ENCODE measurements at regions of chr9 and their contacts with region 1.

Region 1: GRCh38 chr9:22452415-22453010 is 5.9 kb downstream of the DMRTA1 start:
- DNase-seq: no peak
- H3K4me3 ChIP-seq: no peak overlapping the region
- H3K27ac ChIP-seq: no peak overlapping the region
- H3K27me3 ChIP-seq: no peaks in the 10 kb centered on the region
- CTCF ChIP-seq: peak; percentile 73

Region 2: GRCh38 chr9:22265038-22265437 is 187.5 kb before region 1 on chr9:
- CTCF ChIA-PET with region 1: no interaction called
- POLR2A ChIA-PET with region 1: no interaction called
- DNase-seq: no peak
- H3K4me3 ChIP-seq: no peak overlapping the region
- H3K27ac ChIP-seq: no peak overlapping the region
- H3K27me3 ChIP-seq: no peaks in the 10 kb centered on the region
- CTCF ChIP-seq: no peak

Region 3: DNA sequence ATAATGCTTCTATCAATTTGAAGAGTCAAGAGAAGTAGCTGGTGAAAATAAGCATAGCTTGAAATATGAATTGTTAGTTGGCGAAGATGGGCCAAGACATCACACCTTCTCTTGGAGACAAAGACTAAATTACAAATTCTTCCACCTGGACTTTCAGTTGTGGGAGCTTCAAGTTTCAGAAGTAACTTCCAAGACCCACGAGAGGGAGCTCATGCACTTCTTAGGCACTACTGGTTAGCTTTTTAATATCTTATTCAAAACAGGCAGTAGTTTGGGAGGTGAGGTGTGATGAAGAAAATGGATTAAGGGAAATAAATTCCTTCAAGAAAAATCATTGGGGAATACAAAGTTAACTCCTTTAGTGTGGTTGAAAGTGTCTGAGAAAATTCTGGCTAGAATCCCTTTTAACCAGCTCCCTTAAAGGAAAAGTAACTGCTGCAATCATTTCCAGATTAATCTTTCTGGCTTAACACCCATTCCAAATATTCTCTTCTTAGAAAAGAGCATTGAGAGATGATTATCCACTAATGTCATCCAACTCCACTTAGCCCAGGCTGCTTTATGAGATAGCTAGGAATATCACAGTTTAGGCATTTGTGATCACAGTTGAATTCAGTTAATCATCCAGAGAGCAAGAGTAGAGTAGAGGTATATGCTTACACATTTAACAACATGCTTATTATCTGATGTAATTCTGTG is 145.4 kb before region 1 on chr9:
- CTCF ChIA-PET with region 1: interaction called, 94 read pairs
- POLR2A ChIA-PET with region 1: no interaction called
- DNase-seq: peak; percentile 13
- H3K4me3 ChIP-seq: no peak overlapping the region
- H3K27ac ChIP-seq: no peak overlapping the region
- H3K27me3 ChIP-seq: no peaks in the 10 kb centered on the region
- CTCF ChIP-seq: peak; percentile 75

Region 4: DNA sequence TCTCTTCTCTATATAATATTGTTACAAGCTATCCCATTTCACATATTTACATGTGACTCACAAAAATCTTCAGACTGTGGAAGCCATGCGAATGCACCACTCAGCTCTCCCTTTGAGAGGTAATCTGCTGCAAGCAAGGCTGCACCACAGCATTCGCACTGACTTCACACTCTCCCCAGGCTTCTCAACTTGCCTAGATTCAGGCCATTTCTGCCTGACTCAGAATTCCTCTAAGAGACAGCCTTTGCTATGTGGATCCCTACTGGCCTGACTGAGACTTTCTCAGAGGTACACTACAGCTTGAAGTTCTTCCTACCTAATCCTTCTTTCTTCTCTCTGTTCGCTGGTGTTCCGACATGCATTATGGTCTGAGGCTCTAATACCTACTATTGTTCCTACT is 27.0 kb before region 1 on chr9:
- CTCF ChIA-PET with region 1: interaction called, 10 read pairs
- POLR2A ChIA-PET with region 1: no interaction called
- DNase-seq: no peak
- H3K4me3 ChIP-seq: no peak overlapping the region
- H3K27ac ChIP-seq: no peak overlapping the region
- H3K27me3 ChIP-seq: no peaks in the 10 kb centered on the region
- CTCF ChIP-seq: no peak

Region 5: GRCh38 chr9:22469928-22470544 is 17.5 kb after region 1 on chr9:
- CTCF ChIA-PET with region 1: interaction called, 13 read pairs
- POLR2A ChIA-PET with region 1: no interaction called
- DNase-seq: no peak
- H3K4me3 ChIP-seq: no peak overlapping the region
- H3K27ac ChIP-seq: no peak overlapping the region
- H3K27me3 ChIP-seq: no peaks in the 10 kb centered on the region
- CTCF ChIP-seq: peak; percentile 71

Measured in AG04450 (cell line).